ENCODE measurements at regions of chr17 and their contacts with region 1.

Region 1: DNA sequence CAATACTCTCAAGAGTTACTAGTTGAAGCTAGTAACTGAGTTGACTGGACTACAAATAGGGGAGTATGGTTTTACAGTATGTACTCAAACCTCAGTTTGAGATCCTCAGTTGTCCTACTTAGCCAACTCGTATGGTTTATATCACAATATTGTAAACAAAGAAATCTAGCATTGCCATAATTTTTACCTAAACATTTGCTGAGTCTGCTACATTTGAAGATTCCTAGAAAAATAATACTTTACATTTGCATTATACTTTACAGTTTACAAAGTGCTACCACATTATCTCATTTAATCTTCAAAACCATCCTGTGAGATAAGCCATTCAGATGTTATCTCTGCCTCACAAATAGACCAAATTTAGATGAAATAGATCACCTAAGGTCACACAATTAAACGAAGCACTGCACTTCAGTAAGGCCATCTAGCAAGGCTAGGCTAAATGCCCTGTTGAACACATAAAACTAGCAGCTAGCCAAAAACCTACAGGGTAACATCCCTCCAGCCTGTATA is 16.3 kb downstream of the CBX1 start:
- DNase-seq: no peak
- ATAC-seq: no peak
- H3K4me3 Mint-ChIP-seq: no peak overlapping the region
- H3K27ac Mint-ChIP-seq: no peak overlapping the region
- H3K4me1 Mint-ChIP-seq: peaks cover 7% of the 10 kb centered on the region
- H3K27me3 Mint-ChIP-seq: no peaks in the 10 kb centered on the region

Region 2: GRCh38 chr17:47866941-47867340 is 218.0 kb before region 1 on chr17:
- CTCF ChIA-PET with region 1: no interaction called
- POLR2A ChIA-PET with region 1: no interaction called
- DNase-seq: no peak
- ATAC-seq: no peak
- H3K4me3 Mint-ChIP-seq: no peak overlapping the region
- H3K27ac Mint-ChIP-seq: no peak overlapping the region
- H3K4me1 Mint-ChIP-seq: peaks cover 4% of the 10 kb centered on the region
- H3K27me3 Mint-ChIP-seq: peaks cover 18% of the 10 kb centered on the region

Region 3: GRCh38 chr17:48101012-48101720 is 16.2 kb after region 1 on chr17 and contains the start of gene CBX1:
- CTCF ChIA-PET with region 1: interaction called, 89 read pairs
- POLR2A ChIA-PET with region 1: interaction called, 5 read pairs
- DNase-seq: peak; percentile 96
- ATAC-seq: peak; percentile 96
- H3K4me3 Mint-ChIP-seq: peak within 1 kb of the TSS; percentile 99
- H3K27ac Mint-ChIP-seq: peak within 1 kb of the TSS; percentile 88
- H3K4me1 Mint-ChIP-seq: peaks cover 52% of the 10 kb centered on the region
- H3K27me3 Mint-ChIP-seq: no peaks in the 10 kb centered on the region
- total RNA-seq, gene CBX1: 68.2 to 70.3 TPM

Region 4: DNA sequence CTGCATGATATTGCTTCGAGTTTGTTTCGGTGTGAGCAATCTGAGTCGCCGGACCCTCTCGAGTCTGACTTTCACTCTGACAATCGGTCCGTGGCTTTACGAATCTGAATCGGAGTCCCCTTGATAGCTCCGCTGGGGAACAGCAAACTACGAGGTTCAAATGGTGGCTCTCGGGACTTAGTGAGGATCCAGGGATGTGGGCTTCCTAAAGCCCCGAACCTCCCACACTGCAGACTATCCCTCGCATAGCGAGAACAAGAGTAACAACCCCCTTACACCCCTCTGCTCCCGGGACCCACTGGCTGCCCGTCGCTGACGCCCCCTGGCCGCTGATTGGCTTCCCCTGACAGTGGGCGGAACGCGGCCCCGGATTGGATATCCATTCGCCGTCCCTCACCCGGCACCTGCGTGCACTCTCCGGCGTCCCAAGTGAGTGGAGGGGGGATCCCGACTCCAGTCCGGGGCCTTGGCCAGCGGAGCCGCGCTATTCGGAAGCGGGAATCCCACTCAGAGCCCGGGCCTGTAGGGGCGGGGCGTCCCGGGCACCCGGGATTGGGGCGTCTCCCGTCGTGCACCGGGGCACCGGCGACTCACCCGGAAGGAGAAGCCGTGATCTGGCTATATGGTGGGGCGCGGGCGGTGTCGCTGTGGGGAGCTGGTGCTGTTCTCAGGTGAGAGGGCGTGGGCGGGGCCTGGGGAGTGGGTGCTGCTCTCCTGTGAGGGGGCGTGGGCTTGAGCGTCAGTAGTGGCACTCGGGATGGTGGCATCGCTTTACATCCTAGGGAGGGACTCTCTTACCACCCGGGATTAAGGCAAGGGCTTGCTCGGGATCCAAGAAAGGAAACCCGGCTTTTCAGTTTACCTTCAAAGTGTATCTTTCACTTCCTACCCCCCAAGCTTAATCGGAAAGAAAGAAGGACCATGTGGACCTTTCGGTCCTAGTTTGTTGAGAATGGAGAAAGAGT is 22.5 kb after region 1 on chr17 and contains the start of gene SNX11:
- CTCF ChIA-PET with region 1: interaction called, 30 read pairs
- POLR2A ChIA-PET with region 1: interaction called, 5 read pairs
- DNase-seq: peak; percentile 94
- ATAC-seq: peak; percentile 95
- H3K4me3 Mint-ChIP-seq: peak within 1 kb of the TSS; percentile 99
- H3K27ac Mint-ChIP-seq: peak within 1 kb of the TSS; percentile 98
- H3K4me1 Mint-ChIP-seq: peaks cover 67% of the 10 kb centered on the region
- H3K27me3 Mint-ChIP-seq: no peaks in the 10 kb centered on the region
- total RNA-seq, gene SNX11: 33.3 to 34.2 TPM

Region 5: GRCh38 chr17:48113201-48113676 is 28.3 kb after region 1 on chr17:
- CTCF ChIA-PET with region 1: interaction called, 30 read pairs
- POLR2A ChIA-PET with region 1: interaction called, 5 read pairs
- DNase-seq: peak; percentile 81
- ATAC-seq: peak; percentile 93
- H3K4me3 Mint-ChIP-seq: peak overlapping the region; percentile 32
- H3K27ac Mint-ChIP-seq: peak overlapping the region; percentile 96
- H3K4me1 Mint-ChIP-seq: peaks cover 46% of the 10 kb centered on the region
- H3K27me3 Mint-ChIP-seq: no peaks in the 10 kb centered on the region

Region 6: DNA sequence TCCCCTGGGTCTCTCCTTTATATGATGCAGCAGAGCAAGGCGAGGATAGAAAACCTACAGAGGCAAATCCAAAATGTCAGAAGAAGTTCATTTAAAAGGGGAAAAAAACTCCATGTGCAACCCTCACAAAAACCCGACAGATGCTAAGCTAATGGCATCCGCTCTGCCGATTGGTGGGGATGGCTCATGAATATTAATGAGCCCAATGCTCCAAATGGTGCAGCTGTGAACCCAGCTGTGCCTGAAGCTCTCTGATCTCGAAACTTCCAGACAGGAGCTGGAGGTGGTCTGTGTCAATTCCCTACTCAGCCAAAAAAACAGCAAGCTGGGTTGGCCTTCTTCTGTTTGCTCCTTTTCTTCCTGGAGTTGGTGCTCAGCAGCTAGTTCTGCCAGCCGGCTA is 38.1 kb after region 1 on chr17:
- CTCF ChIA-PET with region 1: interaction called, 111 read pairs
- POLR2A ChIA-PET with region 1: interaction called, 3 read pairs
- DNase-seq: no peak
- ATAC-seq: no peak
- H3K4me3 Mint-ChIP-seq: no peak overlapping the region
- H3K27ac Mint-ChIP-seq: peak overlapping the region; percentile 39
- H3K4me1 Mint-ChIP-seq: no peaks in the 10 kb centered on the region
- H3K27me3 Mint-ChIP-seq: no peaks in the 10 kb centered on the region

Region 7: DNA sequence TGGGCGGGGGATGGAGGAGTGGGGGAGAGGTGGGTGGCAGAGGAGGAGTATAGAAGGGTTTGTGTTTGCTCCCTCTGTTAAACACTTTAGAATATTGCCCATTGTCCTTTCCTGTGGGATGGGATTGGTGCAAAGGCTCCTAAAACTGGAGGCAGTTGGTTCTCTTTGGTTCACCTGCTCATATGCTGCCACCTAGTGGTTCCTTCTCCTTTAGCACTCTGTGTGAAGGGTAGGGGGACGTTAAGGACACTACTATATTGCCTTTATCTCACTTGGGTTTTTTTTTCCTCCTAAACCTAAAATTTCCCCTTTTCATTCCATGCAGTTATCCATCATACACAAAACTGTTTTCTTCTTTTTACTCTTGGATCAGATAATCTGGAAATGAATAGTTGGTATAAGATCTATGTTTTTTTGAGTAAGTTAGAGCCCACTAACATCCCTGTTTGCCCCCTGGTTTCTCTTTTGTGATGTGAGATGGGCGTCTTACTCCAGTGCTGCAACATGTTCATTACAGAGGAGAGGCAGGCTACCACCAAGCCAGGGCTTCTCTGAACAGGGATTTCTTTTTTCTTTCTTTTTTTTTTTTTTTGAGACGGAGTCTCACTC is 46.3 kb after region 1 on chr17:
- CTCF ChIA-PET with region 1: interaction called, 111 read pairs
- POLR2A ChIA-PET with region 1: no interaction called
- DNase-seq: peak; percentile 70
- ATAC-seq: peak; percentile 80
- H3K4me3 Mint-ChIP-seq: no peak overlapping the region
- H3K27ac Mint-ChIP-seq: peak overlapping the region; percentile 39
- H3K4me1 Mint-ChIP-seq: peaks cover 5% of the 10 kb centered on the region
- H3K27me3 Mint-ChIP-seq: no peaks in the 10 kb centered on the region

Region 8: DNA sequence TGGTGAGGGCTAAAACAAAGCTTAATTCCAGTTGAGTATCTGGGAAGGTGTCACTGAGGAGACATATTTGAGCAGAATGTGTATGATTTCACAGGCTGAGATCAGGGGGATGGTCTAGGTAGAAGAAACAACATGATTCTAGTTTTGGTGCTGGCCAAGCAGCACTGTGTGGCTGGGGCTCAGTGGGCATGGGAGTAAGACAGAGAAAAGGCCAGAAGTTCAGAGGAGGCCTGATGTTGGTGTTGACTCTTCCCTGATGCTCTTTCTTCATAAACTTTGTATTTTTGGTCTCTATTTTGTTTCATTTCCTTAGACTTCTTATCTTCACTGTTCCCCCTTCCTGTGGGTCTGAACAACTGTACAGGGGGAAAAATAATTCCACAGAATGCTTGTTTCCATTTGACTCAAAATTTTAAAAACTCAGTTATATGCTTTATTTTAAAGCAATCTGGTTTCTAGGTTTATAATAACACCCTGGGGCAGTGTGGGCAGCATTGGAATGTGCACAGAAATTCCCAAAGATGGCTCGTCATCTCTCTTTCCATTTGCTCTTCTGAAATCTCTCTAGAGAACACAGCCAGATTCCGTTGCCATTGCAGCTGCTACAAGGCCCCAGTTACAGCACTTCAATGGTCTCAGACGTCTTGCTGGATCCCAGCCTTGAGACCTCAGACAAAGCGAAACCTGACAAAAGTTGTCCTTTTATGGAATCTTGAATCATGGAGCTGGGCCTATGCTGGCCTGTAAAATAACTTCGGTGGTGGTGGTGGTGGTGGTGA is 90.9 kb after region 1 on chr17:
- CTCF ChIA-PET with region 1: no interaction called
- POLR2A ChIA-PET with region 1: no interaction called
- DNase-seq: no peak
- ATAC-seq: no peak
- H3K4me3 Mint-ChIP-seq: no peak overlapping the region
- H3K27ac Mint-ChIP-seq: no peak overlapping the region
- H3K4me1 Mint-ChIP-seq: peaks cover 24% of the 10 kb centered on the region
- H3K27me3 Mint-ChIP-seq: no peaks in the 10 kb centered on the region

Measured in activated CD8-positive, alpha-beta T cell treated with anti-CD3 and anti-CD28 coated beads, Interleukin-2, amount 10 ng/mL, durations not matched to agents 7 days and 5 days (primary cell).